GM10248 (cell line): ENCODE measurements at regions of chr11 and their contacts with region 1.

Region 1: GRCh38 chr11:121655537-121656327 is 203.0 kb upstream of the SORL1-AS1 start:
- DNase-seq: peak; percentile 91
- CTCF ChIP-seq: peak; percentile 93

Region 2: GRCh38 chr11:120660024-120660565 is 995.6 kb before region 1 on chr11:
- CTCF ChIA-PET with region 1: no interaction called
- POLR2A ChIA-PET with region 1: interaction called, 11 read pairs
- DNase-seq: peak; percentile 75
- CTCF ChIP-seq: peak; percentile 44

Region 3: DNA sequence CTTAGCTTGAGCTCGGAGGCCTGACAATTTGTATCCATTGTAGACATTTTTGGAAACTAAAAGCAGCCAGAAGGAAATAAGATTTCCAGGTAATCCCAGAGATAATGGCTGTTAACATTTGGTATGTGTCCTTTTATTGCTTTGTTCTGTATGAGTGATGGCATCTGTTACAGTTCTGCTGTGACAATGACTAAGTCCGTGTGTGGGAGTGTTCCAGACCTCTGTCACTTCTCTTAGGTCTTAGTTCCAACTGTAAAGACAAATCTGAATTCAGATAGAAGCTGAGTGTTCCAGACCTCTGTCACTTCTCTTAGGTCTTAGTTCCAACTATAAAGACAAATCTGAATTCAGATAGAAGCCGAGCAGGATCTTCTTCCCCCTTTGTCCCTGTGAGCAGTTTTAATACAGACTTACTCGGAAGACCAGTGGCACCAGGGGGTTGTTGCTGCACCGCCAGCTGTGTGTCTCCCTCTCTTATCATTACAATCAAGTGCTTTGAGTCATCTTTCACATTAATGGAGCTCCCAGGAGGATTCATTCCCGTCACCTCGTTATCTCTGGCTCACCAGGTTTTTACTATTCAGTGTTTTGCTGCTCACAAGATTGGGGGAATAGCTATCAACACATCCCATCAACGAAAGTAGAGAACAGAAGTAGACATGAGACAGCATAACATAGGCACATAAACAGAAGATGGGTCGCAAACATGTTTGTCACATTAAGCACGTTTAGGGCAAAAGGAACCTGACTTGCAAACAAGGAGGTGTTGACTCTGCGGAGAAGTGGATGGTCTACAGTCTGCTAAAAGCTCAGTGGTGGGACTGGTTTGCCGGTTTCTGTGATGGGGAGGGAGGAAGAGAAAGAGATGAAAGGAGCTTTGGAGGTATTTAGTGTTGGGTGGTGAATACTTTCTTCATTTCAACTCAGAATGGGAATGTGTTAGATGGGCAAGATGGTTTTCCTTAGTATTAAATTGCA is 11.9 kb before region 1 on chr11:
- CTCF ChIA-PET with region 1: interaction called, 27 read pairs
- POLR2A ChIA-PET with region 1: no interaction called
- DNase-seq: no peak
- CTCF ChIP-seq: no peak

Region 4: GRCh38 chr11:121716060-121716459 is 60.3 kb after region 1 on chr11:
- CTCF ChIA-PET with region 1: no interaction called
- POLR2A ChIA-PET with region 1: no interaction called
- DNase-seq: no peak
- CTCF ChIP-seq: no peak

Region 5: GRCh38 chr11:122202951-122203456 is 547.3 kb after region 1 on chr11:
- CTCF ChIA-PET with region 1: interaction called, 60 read pairs
- POLR2A ChIA-PET with region 1: no interaction called
- DNase-seq: peak; percentile 75
- CTCF ChIP-seq: peak; percentile 81

Region 6: GRCh38 chr11:122215244-122215992 is 559.7 kb after region 1 on chr11:
- CTCF ChIA-PET with region 1: interaction called, 13 read pairs
- POLR2A ChIA-PET with region 1: no interaction called
- DNase-seq: peak; percentile 64
- CTCF ChIP-seq: peak; percentile 85

Region 7: DNA sequence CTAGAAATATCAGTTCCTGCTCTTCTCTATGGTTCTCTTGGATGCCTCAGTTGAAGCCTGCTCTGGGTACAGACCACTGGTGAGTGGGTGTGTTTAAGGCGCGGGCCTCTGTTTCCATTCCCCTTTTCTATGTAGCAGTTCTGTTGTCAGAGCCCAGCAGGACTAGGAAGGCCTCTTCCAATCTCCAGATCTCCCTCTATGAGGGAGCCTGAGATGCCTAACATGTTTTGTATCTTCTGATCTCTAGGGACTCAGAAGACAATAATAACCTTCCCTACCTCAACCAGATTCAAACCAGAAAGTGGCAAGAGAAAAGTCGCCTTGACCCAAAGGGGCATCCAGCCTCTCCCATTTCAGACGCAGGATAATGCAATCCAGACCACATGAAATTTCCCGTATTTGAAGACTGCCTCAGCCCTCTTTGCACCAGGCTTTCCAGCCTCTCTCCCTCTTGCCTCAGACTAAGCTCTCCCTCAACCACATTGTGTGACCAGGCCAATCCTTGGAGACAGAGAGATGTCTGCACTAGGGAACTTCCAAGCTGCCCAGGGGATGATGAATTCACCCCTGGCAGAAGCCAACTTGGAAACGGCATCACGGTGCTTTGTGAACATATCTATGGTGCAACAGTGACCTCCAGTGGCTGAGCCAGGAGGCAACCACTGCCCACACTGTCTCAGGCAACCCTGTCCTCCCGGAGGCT is 849.7 kb after region 1 on chr11:
- CTCF ChIA-PET with region 1: interaction called, 32 read pairs
- POLR2A ChIA-PET with region 1: no interaction called
- DNase-seq: peak; percentile 57
- CTCF ChIP-seq: peak; percentile 81